A549 (cell line): ENCODE measurements at regions of chr15 and their contacts with region 1.

Region 1: GRCh38 chr15:98518823-98519561 is 129.3 kb upstream of the IGF1R start:
- DNase-seq: peak; percentile 85 to 86
- ATAC-seq: peak; percentile 89 to 96
- H3K4me3 ChIP-seq: no peak overlapping the region
- H3K27ac ChIP-seq: peak overlapping the region; percentile 3 to 50; a peak in 2 of 6 replicates
- H3K4me1 ChIP-seq: no peaks in the 10 kb centered on the region
- CTCF ChIP-seq: peak; percentile 91
- EP300 ChIP-seq: no peak
- POLR2A ChIP-seq: no peak
- RAD21 ChIP-seq: peak; percentile 91 to 93

Region 2: GRCh38 chr15:98369081-98369716 is 149.8 kb before region 1 on chr15:
- CTCF ChIA-PET with region 1: no interaction called
- POLR2A ChIA-PET with region 1: no interaction called
- DNase-seq: no peak
- ATAC-seq: no peak
- H3K4me3 ChIP-seq: no peak overlapping the region
- H3K27ac ChIP-seq: no peak overlapping the region
- H3K4me1 ChIP-seq: no peaks in the 10 kb centered on the region
- CTCF ChIP-seq: no peak
- EP300 ChIP-seq: no peak
- POLR2A ChIP-seq: no peak
- RAD21 ChIP-seq: no peak

Region 3: DNA sequence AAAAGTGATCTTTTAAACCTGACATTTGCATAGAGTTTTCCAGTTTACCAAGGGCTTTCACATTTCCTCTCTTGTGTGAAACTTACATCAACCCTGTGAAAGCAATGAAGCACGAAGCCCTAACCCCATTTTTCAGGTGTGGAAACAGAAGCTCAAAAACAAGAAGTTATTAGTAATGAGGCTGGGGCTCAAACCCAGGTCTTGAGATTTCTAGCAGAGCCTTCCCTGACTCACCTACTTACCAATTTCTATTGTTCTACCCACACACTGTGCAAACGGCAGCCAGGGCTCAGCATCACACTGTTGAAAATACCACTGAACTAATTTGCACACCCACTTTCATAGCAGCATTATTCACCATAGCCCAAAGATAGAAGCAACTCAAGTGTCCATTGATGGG is 11.6 kb after region 1 on chr15:
- CTCF ChIA-PET with region 1: interaction called, 22 read pairs
- POLR2A ChIA-PET with region 1: no interaction called
- DNase-seq: no peak
- ATAC-seq: no peak
- H3K4me3 ChIP-seq: no peak overlapping the region
- H3K27ac ChIP-seq: no peak overlapping the region
- H3K4me1 ChIP-seq: no peaks in the 10 kb centered on the region
- CTCF ChIP-seq: no peak
- EP300 ChIP-seq: no peak
- POLR2A ChIP-seq: no peak
- RAD21 ChIP-seq: no peak

Region 4: DNA sequence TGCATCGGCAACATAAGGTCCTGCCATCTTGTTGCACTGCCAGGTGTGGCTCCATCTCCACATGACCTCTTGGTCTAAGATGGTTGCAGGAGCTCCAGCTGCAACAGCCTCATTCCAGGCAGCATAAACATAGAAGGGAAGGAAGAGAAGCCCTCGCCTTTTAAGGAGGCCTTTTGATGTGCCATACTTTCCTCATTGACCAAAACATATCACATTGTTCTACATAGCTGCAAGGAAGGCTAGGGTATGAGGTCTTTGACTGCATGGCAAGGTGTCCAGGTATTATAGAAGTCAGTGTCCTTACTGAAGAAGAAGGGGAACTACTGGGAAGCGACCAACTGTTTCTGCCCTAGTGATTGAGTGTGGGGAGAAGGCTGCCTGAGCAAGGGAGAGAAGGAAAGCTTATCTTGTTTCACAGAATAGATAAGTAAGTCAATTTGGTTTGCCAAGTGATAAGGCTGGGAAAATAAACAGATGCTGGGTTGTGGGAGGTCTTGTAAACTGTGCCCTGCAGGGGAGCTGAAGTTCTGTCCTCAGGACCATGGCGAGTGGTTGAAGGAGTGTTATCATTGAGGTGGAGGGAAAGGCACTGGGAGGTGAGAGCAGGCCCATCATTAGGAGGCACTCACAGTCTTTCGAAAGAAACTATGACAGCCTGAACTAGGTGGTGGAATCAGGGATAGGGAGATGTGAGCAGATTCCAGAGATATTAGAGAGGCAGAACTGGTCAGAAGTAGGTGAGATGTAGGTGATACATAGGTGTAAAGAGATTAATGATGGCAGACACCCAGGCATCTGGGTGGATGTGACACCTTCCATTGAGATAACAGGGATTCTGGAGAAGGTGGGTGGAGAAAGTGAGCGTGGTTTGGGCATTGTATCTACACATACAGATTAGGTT is 35.5 kb after region 1 on chr15:
- CTCF ChIA-PET with region 1: interaction called, 19 read pairs
- POLR2A ChIA-PET with region 1: no interaction called
- DNase-seq: no peak
- ATAC-seq: peak in 1 of 2 experiments; percentile 16; a peak in 2 of 6 replicates
- H3K4me3 ChIP-seq: no peak overlapping the region
- H3K27ac ChIP-seq: no peak overlapping the region
- H3K4me1 ChIP-seq: no peaks in the 10 kb centered on the region
- CTCF ChIP-seq: no peak
- EP300 ChIP-seq: no peak
- POLR2A ChIP-seq: no peak
- RAD21 ChIP-seq: no peak

Region 5: DNA sequence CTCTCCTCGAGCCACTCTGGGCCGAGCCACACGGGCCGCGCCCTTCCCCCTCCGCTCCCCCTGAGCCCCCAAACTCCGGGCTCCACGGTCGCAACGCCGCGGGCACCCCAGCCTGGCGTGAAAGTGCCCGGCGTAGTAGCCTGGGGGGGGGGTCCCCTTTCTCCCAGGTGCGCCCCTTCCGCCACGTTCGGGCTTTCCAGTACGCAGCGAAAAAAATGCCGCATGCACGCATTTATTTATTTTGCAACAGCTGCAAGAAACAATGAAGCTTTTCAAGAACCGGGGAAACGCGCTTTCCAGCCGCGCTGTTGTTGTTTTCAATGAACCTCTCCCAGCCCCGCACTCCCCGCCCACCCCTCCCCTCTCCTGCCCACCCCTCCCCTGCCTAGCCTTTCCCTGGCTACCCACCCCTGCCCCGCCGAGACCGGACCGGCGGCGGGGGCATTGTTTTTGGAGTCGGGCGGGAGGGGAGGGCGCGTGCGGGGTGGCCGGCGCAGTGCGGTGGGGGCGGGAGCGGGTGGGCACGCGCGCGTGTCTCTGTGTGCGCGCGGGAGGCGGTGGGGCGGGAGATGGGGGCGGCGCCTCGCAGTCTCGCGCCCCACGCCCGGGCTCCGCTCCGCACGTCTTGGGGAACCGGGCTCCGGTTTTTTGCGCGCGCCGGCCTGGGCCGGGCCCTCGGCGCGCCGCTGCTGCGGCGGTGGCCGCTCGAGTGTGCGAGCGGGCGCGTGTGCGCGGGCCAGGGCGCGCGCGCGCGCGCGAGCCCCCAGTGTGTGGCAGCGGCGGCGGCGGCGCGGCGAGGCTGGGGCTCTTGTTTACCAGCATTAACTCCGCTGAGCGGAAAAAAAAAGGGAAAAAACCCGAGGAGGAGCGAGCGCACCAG is 129.0 kb after region 1 on chr15 and contains the start of gene IGF1R:
- CTCF ChIA-PET with region 1: interaction called, 89 read pairs
- POLR2A ChIA-PET with region 1: interaction called, 7 read pairs
- DNase-seq: peak; percentile 79 to 92
- ATAC-seq: peak; percentile 51 to 55
- H3K4me3 ChIP-seq: peak within 1 kb of the TSS; percentile 84
- H3K27ac ChIP-seq: peak within 1 kb of the TSS; percentile 96 to 97
- H3K4me1 ChIP-seq: peaks cover 21% of the 10 kb centered on the region
- CTCF ChIP-seq: peak; percentile 4; the same call in 2 of the 3 replicates
- EP300 ChIP-seq: peak in 1 of 2 experiments; percentile 33; a peak in 1 of 5 replicates
- POLR2A ChIP-seq: no peak
- RAD21 ChIP-seq: no peak
- polyA plus RNA-seq, gene IGF1R: 69.5 and 117 TPM in 2 replicates

Region 6: DNA sequence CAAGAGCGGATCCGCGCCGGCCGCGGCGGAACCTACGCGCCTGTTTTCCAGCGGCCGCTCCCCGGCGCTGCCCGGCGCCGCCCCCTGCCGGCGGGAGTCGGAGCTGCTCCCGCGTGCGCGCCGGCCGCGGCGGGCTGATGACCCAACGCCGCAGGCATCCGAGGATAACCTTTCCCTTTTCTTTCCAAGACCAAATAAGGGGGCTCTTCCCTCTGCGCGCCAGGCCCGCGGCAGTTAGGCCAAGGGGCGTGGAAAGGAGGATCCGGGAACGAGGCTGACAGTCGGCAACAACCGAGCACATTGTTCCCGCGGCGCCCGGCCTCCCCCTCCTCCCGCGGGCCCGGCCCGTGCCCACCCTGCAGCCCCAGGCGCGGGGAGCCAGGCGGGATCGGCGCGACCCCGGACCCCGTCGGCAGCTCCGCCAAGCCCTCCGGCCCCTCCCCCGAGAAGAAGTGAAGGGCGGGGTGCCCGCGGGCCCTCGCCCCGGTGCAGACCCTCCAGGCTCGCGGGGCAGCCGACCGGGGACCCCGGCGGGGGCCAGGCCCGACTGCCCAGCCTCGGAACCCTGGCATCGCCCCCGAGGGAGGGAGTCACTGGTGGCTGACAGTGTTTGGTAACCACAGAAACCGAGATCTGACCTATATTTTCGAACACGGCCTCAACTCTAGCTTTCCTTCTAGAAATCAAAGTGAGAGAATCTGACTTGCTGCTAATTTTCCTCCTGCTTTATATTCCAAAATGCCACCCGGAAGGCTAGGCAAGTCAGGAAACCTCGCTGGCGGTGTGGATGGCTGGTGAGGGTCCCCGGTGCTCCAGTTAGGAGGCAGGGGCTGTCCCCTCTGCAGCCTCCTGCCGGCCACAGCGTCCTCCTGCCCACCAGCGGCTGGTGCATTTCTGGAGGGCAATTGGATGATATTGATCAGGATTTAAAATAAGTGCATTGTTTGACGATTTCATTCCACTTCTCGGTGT is 540.3 kb after region 1 on chr15:
- CTCF ChIA-PET with region 1: interaction called, 12 read pairs
- POLR2A ChIA-PET with region 1: no interaction called
- DNase-seq: peak; percentile 78 to 84
- ATAC-seq: peak; percentile 80 to 86
- H3K4me3 ChIP-seq: peak overlapping the region; percentile 51
- H3K27ac ChIP-seq: peak overlapping the region; percentile 87 to 95
- H3K4me1 ChIP-seq: peaks cover 14% of the 10 kb centered on the region; the same call in 2 of the 3 replicates
- CTCF ChIP-seq: peak; percentile 85
- EP300 ChIP-seq: peak in 1 of 2 experiments; percentile 47; a peak in 1 of 5 replicates
- POLR2A ChIP-seq: peak; percentile 30
- RAD21 ChIP-seq: peak; percentile 72 to 95

Region 7: GRCh38 chr15:99104788-99105513 is 586.0 kb after region 1 on chr15 and contains the start of gene SYNM:
- CTCF ChIA-PET with region 1: interaction called, 12 read pairs
- POLR2A ChIA-PET with region 1: no interaction called
- DNase-seq: peak; percentile 93 to 94
- ATAC-seq: peak; percentile 83 to 91
- H3K4me3 ChIP-seq: peak within 1 kb of the TSS; percentile 64
- H3K27ac ChIP-seq: peak within 1 kb of the TSS; percentile 77 to 92
- H3K4me1 ChIP-seq: peaks cover 20% of the 10 kb centered on the region
- CTCF ChIP-seq: peak; percentile 99
- EP300 ChIP-seq: no peak
- POLR2A ChIP-seq: peak; percentile 100
- RAD21 ChIP-seq: peak; percentile 76 to 97
- polyA plus RNA-seq, gene SYNM: 22.6 and 23.7 TPM in 2 replicates